Esophagus muscularis mucosa (tissue), 4 donors: ENCODE measurements at regions of chr16 and their contacts with region 1.

Region 1: GRCh38 chr16:70380861-70381603 is 34.3 kb downstream of the DDX19A start:
- DNase-seq: peak; percentile 99
- H3K4me3 ChIP-seq: peak overlapping the region; percentile 64 to 80 (median 68)
- H3K27ac ChIP-seq: peak overlapping the region; percentile 76 to 88 (median 82)
- H3K4me1 ChIP-seq: peaks cover 16 to 31% (median 24%) of the 10 kb centered on the region in 4 donors
- H3K27me3 ChIP-seq: no peaks in the 10 kb centered on the region
- CTCF ChIP-seq: peak in 2 of 3 experiments; percentile 3 to 15
- EP300 ChIP-seq: no peak
- POLR2A ChIP-seq: no peak

Region 2: GRCh38 chr16:70304892-70305448 is 76.1 kb before region 1 on chr16:
- intact Hi-C with region 1: no loop called
- DNase-seq: no peak
- H3K4me3 ChIP-seq: no peak overlapping the region
- H3K27ac ChIP-seq: no peak overlapping the region
- H3K4me1 ChIP-seq: peaks cover 3 to 13% (median 9%) of the 10 kb centered on the region in 4 donors
- H3K27me3 ChIP-seq: no peaks in the 10 kb centered on the region
- CTCF ChIP-seq: no peak
- EP300 ChIP-seq: no peak
- POLR2A ChIP-seq: no peak

Region 3: GRCh38 chr16:70331588-70332358 is 49.3 kb before region 1 on chr16:
- intact Hi-C with region 1: no loop called
- DNase-seq: no peak
- H3K4me3 ChIP-seq: no peak overlapping the region
- H3K27ac ChIP-seq: peak overlapping the region in 3 of 4 donors; percentile 12 to 68 (median 57)
- H3K4me1 ChIP-seq: peaks cover 0 to 18% (median 2%) of the 10 kb centered on the region in 4 donors
- H3K27me3 ChIP-seq: no peaks in the 10 kb centered on the region
- CTCF ChIP-seq: peak in 2 of 3 experiments; percentile 32 to 56
- EP300 ChIP-seq: no peak
- POLR2A ChIP-seq: no peak

Region 4: GRCh38 chr16:70438969-70439862 is 58.2 kb after region 1 on chr16 and contains the start of gene ST3GAL2:
- intact Hi-C with region 1: loop called (anchors 2 kb)
- DNase-seq: peak; percentile 97
- H3K4me3 ChIP-seq: peak within 1 kb of the TSS; percentile 84 to 94 (median 86)
- H3K27ac ChIP-seq: peak within 1 kb of the TSS; percentile 81 to 87 (median 84)
- H3K4me1 ChIP-seq: peaks cover 32 to 43% (median 40%) of the 10 kb centered on the region in 4 donors
- H3K27me3 ChIP-seq: no peaks in the 10 kb centered on the region
- CTCF ChIP-seq: peak in 1 of 3 experiments; percentile 14
- EP300 ChIP-seq: no peak
- POLR2A ChIP-seq: no peak
- total RNA-seq, gene ST3GAL2: 18.6 to 34.9 (median 27.2) TPM

Region 5: GRCh38 chr16:70454222-70455034 is 73.4 kb after region 1 on chr16 and contains the start of gene FCSK:
- intact Hi-C with region 1: loop called (anchors 5 kb)
- DNase-seq: no peak
- H3K4me3 ChIP-seq: peak within 1 kb of the TSS; percentile 86 to 98 (median 94)
- H3K27ac ChIP-seq: peak within 1 kb of the TSS; percentile 90 to 96 (median 94)
- H3K4me1 ChIP-seq: peaks cover 15 to 30% (median 25%) of the 10 kb centered on the region in 4 donors
- H3K27me3 ChIP-seq: peaks cover 0 to 7% (median 0%) of the 10 kb centered on the region in 4 donors
- CTCF ChIP-seq: no peak
- EP300 ChIP-seq: no peak
- POLR2A ChIP-seq: no peak
- total RNA-seq, gene FCSK: 8.3 to 13.7 (median 12.3) TPM